Sciatic nerve (tissue), 2 donors: ENCODE measurements at regions of chr15 and their contacts with region 1.

Region 1: GRCh38 chr15:74821091-74821789 is 5.2 kb upstream of the CPLX3 start:
- DNase-seq: no peak
- ATAC-seq: no peak

Region 2: DNA sequence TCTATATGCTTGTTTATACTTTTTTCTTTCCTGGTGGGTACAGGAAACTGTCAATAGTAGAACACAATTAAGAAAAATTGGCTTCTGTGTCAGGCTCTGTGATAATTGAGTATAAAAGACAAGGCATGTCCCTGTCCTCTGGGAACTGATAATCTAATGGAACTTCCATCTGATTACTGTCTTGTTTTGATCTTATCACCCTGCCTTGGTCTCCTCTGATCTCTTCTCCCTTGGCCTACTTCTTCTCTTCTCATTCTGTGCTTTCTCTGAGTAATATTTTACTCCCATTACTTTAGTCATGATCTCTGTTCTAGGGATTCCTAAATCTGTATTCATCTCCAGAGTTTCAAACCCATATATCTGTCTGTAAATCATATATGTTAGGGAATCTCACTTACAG is 1036.6 kb after region 1 on chr15:
- intact Hi-C with region 1: no loop called
- DNase-seq: no peak
- ATAC-seq: no peak

Region 3: GRCh38 chr15:76199108-76200082 is 1378.2 kb after region 1 on chr15:
- intact Hi-C with region 1: loop called (anchors 5 kb)
- DNase-seq: peak; percentile 74
- ATAC-seq: peak; percentile 45